Motor neuron (in vitro differentiated cells): ENCODE measurements at regions of chr15 and their contacts with region 1.

Region 1: GRCh38 chr15:36883713-36884517 is 216.4 kb downstream of the MEIS2 start:
- ATAC-seq: peak; percentile 57 to 99 (median 67)
- H3K4me3 ChIP-seq: peak overlapping the region; percentile 29 to 41 (median 37)
- H3K27ac ChIP-seq: peak overlapping the region; percentile 34 to 90
- H3K4me1 ChIP-seq: peaks cover 32 to 52% of the 10 kb centered on the region in 2 donors

Region 2: GRCh38 chr15:36251450-36251849 is 632.5 kb before region 1 on chr15:
- in situ Hi-C with region 1: no loop called
- ATAC-seq: no peak
- H3K4me3 ChIP-seq: no peak overlapping the region
- H3K27ac ChIP-seq: no peak overlapping the region
- H3K4me1 ChIP-seq: peaks cover 6 to 19% of the 10 kb centered on the region in 2 donors

Region 3: GRCh38 chr15:36501063-36501678 is 382.7 kb before region 1 on chr15:
- in situ Hi-C with region 1: loop called in 1 of 9 experiments (anchors 25 kb)
- ATAC-seq: peak; percentile 97 to 100 (median 99)
- H3K4me3 ChIP-seq: no peak overlapping the region
- H3K27ac ChIP-seq: peak overlapping the region; percentile 49 to 81
- H3K4me1 ChIP-seq: peaks cover 33 to 58% of the 10 kb centered on the region in 2 donors

Region 4: DNA sequence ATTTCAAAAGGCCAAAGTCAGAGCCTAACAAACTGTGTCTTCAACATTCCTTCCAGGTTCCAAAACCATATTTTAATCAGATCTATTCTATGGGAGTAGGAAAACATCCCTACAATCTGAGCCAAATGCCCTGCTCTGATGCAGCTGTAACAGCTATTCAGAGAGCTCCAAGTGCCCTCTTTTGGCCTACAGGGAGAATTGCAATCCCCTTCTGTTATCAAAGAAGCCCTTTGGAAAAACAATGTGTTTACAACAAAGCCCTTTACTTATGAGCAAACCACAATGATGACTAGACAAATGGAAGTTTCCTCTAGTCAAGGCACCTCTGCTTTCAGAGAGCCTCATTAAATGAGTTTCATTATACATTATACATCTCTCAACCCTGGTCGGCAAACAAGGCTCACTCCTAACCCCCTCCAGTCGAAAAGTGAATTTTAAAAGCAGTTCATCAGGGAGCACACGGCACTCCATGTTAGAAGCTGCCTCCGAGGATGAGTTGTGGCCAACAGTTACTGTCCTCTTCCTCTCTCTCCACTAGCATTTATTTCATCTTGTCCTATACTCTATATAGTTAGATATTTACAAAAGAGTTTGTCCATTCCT is 1008.0 kb after region 1 on chr15:
- in situ Hi-C with region 1: loop called in 3 of 9 experiments (anchors 25 kb)
- ATAC-seq: peak; percentile 75 to 90 (median 83)
- H3K4me3 ChIP-seq: no peak overlapping the region
- H3K27ac ChIP-seq: no peak overlapping the region
- H3K4me1 ChIP-seq: peaks cover 0 to 8% of the 10 kb centered on the region in 2 donors